CD4-positive, alpha-beta T cell (primary cell): ENCODE measurements at regions of chr12 and their contacts with region 1.

Region 1: DNA sequence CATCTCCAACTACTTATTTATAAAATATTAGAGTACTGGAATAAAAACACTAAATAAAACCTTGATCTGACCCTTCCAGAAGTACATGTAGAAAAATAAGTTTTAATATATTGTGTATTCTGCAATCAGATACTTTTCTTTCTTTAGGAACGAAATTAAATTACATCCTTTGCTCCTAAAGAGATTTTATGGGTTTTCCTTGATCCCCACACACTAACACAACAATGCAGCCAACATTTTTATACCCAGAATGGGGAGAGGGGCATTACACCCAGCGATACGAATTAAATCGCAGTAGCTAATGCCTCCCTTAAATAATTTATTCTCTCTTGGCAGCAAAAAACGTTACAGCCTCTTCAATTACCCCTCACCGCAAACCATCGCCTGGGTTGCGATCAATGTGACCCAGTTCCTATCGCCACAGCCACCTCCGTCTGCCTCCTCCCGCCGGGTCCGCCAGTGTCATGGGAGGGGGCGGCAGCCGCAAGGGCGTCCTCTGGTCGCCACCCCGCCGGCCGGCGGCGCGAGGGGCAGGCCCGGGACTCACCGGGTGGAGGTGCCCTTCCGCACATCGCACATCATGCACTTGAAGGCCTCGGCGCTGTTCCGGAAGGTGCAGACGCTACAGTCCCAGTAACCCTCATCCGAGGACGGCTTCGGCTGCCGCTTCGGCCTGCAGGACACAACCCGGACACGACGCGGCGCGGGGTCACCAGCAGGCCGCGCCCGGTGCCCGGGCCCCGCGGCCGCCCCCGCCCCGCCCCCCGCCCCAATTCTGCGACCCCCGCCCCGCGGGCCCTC is 796 bp downstream of the YAF2 start:
- DNase-seq: peak; percentile 42 to 90 (median 62)
- ATAC-seq: peak; percentile 72
- H3K4me3 ChIP-seq: peak overlapping the region; percentile 64
- H3K4me3 Mint-ChIP-seq: peak overlapping the region; percentile 91
- H3K27ac ChIP-seq: peak overlapping the region; percentile 35 to 56
- H3K27ac Mint-ChIP-seq: peak overlapping the region; percentile 93
- H3K4me1 ChIP-seq: peaks cover 17% of the 10 kb centered on the region
- H3K4me1 Mint-ChIP-seq: peaks cover 55% of the 10 kb centered on the region
- H3K27me3 ChIP-seq: no peaks in the 10 kb centered on the region
- H3K27me3 Mint-ChIP-seq: no peaks in the 10 kb centered on the region
- CTCF ChIP-seq: peak; percentile 56

Region 2: DNA sequence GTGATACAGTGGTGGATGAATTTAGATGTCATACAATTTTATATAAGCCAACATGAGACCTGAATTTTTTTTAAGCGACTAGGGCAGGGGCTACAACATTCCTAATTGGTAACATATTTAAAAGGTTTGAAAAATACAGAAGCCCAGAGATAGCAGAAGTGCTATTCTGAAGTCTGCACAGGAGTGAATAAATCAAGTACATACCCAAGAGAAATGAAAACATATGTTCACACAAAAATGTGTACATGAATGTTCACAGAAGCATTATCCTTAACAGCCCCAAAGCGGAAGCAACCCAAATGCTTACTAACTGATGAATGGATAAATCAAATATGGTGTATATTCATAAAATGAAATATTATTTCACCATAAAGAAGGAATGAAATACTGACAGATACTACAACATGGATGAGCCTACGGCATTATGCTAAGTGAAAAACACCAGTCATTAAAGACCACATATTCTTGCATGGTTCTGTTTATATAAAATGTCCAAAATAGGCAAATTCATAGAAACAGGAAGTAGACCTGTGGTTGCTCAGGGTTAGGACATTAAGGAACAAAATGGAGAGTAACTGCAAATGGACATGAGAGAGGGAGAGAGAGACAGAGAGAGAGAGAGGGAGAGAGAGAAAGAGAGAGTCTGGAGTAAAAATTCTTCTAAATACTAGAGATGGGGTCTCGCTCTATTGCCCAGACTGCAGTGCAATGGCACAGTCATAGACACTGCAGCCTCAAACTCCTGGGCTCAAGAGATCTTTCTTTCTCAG is 64.6 kb before region 1 on chr12:
- CTCF ChIA-PET with region 1: no interaction called
- POLR2A ChIA-PET with region 1: no interaction called
- intact Hi-C with region 1: no loop called
- DNase-seq: no peak
- ATAC-seq: no peak
- H3K4me3 ChIP-seq: no peak overlapping the region
- H3K4me3 Mint-ChIP-seq: no peak overlapping the region
- H3K27ac ChIP-seq: no peak overlapping the region
- H3K27ac Mint-ChIP-seq: peak overlapping the region; percentile 48
- H3K4me1 ChIP-seq: no peaks in the 10 kb centered on the region
- H3K4me1 Mint-ChIP-seq: peaks cover 24% of the 10 kb centered on the region
- H3K27me3 ChIP-seq: no peaks in the 10 kb centered on the region
- H3K27me3 Mint-ChIP-seq: no peaks in the 10 kb centered on the region
- CTCF ChIP-seq: no peak

Region 3: GRCh38 chr12:42325653-42326474 is 88.6 kb after region 1 on chr12 and contains the starts of genes PPHLN1 and ZCRB1:
- CTCF ChIA-PET with region 1: interaction called, 3 read pairs
- POLR2A ChIA-PET with region 1: interaction called, 10 read pairs
- intact Hi-C with region 1: loop called (anchors 2 kb)
- DNase-seq: peak; percentile 56 to 88 (median 70)
- ATAC-seq: peak; percentile 87
- H3K4me3 ChIP-seq: peak within 1 kb of the TSS; percentile 85
- H3K4me3 Mint-ChIP-seq: peak within 1 kb of the TSS; percentile 99
- H3K27ac ChIP-seq: peak within 1 kb of the TSS; percentile 79 to 80
- H3K27ac Mint-ChIP-seq: peak within 1 kb of the TSS; percentile 97
- H3K4me1 ChIP-seq: peaks cover 27% of the 10 kb centered on the region
- H3K4me1 Mint-ChIP-seq: peaks cover 61% of the 10 kb centered on the region
- H3K27me3 ChIP-seq: no peaks in the 10 kb centered on the region
- H3K27me3 Mint-ChIP-seq: no peaks in the 10 kb centered on the region
- CTCF ChIP-seq: no peak
- total RNA-seq, gene PPHLN1: 100 to 105 TPM
- total RNA-seq, gene ZCRB1: 30.3 to 31.4 TPM